Right ventricle myocardium superior (tissue), 1 donor: ENCODE measurements at regions of chr14 and their contacts with region 1.

Region 1: GRCh38 chr14:68816262-68816942 is 23.5 kb upstream of the ZFP36L1 start:
- DNase-seq: peak; percentile 94
- ATAC-seq: peak; percentile 95

Region 2: GRCh38 chr14:68392393-68393141 is 423.8 kb before region 1 on chr14:
- intact Hi-C with region 1: loop called (anchors 10 kb)
- DNase-seq: peak; percentile 77
- ATAC-seq: peak; percentile 58

Region 3: DNA sequence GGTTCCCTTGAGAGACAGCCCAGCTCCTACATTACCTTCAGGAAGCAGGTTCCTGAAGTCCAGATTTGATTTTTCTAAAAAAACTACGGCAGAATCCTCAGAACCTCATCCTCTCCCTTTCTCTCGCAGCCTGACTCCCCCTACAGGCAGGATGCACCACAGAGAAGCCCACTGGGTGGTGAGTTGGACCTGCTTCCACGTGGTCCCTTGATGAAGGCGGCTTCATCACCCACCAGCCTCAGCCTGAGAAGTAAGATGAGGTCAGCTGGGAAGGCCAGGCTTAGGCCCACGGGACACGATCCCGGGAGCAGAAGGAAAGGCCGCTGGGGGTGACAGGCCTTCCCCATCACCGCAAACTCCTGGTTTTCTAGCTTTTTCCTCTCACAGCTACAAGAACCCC is 79.7 kb after region 1 on chr14:
- intact Hi-C with region 1: no loop called
- DNase-seq: no peak
- ATAC-seq: no peak